B cell (primary cell): ENCODE measurements at regions of chr22 and their contacts with region 1.

Region 1: GRCh38 chr22:40418366-40419201 is 48.2 kb downstream of the SGSM3 start:
- DNase-seq: peak; percentile 62
- ATAC-seq: peak; percentile 20
- H3K4me3 ChIP-seq: no peak overlapping the region
- H3K4me3 Mint-ChIP-seq: no peak overlapping the region
- H3K27ac ChIP-seq: peak overlapping the region; percentile 16 to 17
- H3K27ac Mint-ChIP-seq: peak overlapping the region; percentile 64
- H3K4me1 ChIP-seq: peaks cover 54 to 64% of the 10 kb centered on the region in 2 donors
- H3K4me1 Mint-ChIP-seq: peaks cover 60% of the 10 kb centered on the region
- H3K27me3 ChIP-seq: no peaks in the 10 kb centered on the region
- H3K27me3 Mint-ChIP-seq: no peaks in the 10 kb centered on the region
- CTCF ChIP-seq: no peak

Region 2: DNA sequence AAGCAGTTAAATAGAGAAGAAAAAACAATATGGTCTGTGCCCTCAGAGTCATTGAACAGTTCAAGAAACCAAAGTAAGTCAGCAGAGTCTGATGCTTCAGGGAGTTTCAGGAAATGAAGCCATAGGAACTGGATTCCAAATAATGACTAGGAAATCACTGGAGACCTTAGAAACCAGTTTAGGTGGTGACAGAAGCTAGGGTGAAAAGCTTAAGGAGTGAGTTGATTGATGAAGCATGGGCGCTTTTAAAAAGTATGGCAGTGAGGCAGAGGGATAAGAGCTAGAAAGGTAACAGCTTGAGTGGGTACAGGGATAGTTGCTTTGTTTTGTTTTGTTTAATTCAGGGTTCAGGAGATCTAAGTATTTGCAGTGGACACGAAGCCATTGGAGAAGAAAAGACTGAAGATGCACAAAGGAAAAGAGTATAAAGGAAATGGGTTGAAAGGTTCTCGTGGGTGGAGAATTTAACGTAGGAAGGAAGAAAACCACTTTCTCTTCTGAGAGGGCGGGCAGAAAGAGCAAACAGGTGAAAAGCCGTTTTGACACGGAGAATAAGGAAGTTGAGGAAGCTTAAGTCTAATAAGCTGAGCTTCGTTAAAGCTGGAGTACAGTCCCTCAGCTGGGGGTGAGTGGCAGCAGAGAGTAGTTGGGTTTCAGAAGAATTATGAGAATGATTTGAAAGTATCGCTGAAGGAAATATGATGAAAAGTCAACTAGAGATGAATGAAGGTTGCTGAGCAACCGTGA is 33.4 kb before region 1 on chr22:
- CTCF ChIA-PET with region 1: interaction called, 4 read pairs
- POLR2A ChIA-PET with region 1: interaction called, 11 read pairs
- intact Hi-C with region 1: loop called (anchors 1 kb)
- DNase-seq: peak; percentile 82
- ATAC-seq: peak; percentile 98
- H3K4me3 ChIP-seq: peak overlapping the region; percentile 18 to 63 (median 50)
- H3K4me3 Mint-ChIP-seq: peak overlapping the region; percentile 85
- H3K27ac ChIP-seq: peak overlapping the region; percentile 82 to 87
- H3K27ac Mint-ChIP-seq: peak overlapping the region; percentile 92
- H3K4me1 ChIP-seq: peaks cover 59 to 75% of the 10 kb centered on the region in 2 donors
- H3K4me1 Mint-ChIP-seq: peaks cover 63% of the 10 kb centered on the region
- H3K27me3 ChIP-seq: no peaks in the 10 kb centered on the region
- H3K27me3 Mint-ChIP-seq: no peaks in the 10 kb centered on the region
- CTCF ChIP-seq: peak; percentile 30

Region 3: DNA sequence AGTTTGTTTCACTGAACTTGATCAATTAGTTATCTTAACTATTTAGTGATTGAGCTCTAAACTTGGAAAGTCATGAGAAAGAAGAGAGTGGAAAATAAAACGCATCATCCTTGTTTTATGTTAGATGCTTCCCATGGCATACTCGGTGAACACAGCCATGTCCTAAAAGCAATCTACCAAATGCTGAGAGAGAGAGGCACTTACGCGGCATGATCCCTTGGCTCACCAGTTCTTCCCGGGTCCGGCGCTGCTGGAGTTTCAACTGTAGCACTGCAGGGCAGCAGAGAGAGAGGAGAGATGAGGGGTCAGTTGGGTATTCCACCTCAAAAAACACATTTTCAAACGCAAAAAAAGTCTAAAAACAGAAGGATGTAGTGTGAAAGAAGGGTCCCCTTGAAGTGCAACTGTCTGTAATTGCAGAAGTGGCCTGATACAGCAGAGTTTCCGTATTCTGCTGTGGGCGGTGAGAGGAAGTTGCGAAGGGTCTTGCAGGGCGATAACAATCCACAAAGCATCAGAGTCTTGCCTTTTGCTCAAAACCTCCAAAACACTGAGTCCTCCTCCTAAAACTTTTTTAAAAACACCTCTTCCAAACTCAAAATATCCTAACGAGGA is 44.5 kb after region 1 on chr22:
- CTCF ChIA-PET with region 1: no interaction called
- POLR2A ChIA-PET with region 1: interaction called, 3 read pairs
- intact Hi-C with region 1: loop called (anchors 10 kb)
- DNase-seq: peak; percentile 77
- ATAC-seq: peak; percentile 88
- H3K4me3 ChIP-seq: peak overlapping the region; percentile 73 to 99 (median 80)
- H3K4me3 Mint-ChIP-seq: peak overlapping the region; percentile 97
- H3K27ac ChIP-seq: peak overlapping the region; percentile 81 to 89
- H3K27ac Mint-ChIP-seq: peak overlapping the region; percentile 98
- H3K4me1 ChIP-seq: peaks cover 36 to 43% of the 10 kb centered on the region in 2 donors
- H3K4me1 Mint-ChIP-seq: peaks cover 55% of the 10 kb centered on the region
- H3K27me3 ChIP-seq: no peaks in the 10 kb centered on the region
- H3K27me3 Mint-ChIP-seq: no peaks in the 10 kb centered on the region
- CTCF ChIP-seq: no peak

Region 4: DNA sequence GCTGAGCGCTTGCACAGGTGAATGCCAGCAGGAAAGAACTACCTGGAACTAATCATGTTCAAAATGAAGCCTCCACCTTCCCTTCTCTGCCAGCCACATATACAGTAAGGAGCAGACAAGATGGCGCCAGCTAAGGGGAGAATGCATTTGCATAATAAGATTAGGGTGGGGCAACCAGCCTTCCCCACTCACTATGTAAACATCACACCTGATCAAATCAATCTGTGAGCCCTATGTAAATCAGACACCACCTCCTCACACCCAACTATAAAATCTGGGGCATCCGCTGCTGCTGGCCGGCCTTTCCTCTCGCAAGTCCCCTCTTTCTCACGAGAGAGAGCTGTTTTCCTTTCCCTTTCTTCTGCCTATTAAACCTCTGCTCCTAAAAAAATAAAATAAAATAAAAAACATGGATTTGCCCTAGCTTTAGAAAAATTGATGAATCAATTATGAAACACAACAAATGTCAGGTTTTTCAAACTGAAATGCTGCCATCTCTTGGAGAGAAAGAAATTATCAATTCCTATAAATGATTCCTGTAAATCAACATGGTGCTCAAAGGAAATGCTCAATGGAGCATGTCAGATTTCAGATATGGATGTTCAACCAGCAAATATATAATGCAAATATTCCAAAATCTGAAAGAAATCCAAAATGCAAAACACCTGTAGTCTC is 60.7 kb after region 1 on chr22:
- CTCF ChIA-PET with region 1: no interaction called
- POLR2A ChIA-PET with region 1: no interaction called
- intact Hi-C with region 1: no loop called
- DNase-seq: no peak
- ATAC-seq: no peak
- H3K4me3 ChIP-seq: no peak overlapping the region
- H3K4me3 Mint-ChIP-seq: no peak overlapping the region
- H3K27ac ChIP-seq: no peak overlapping the region
- H3K27ac Mint-ChIP-seq: no peak overlapping the region
- H3K4me1 ChIP-seq: peaks cover 4 to 5% of the 10 kb centered on the region in 2 donors
- H3K4me1 Mint-ChIP-seq: peaks cover 15% of the 10 kb centered on the region
- H3K27me3 ChIP-seq: no peaks in the 10 kb centered on the region
- H3K27me3 Mint-ChIP-seq: no peaks in the 10 kb centered on the region
- CTCF ChIP-seq: no peak